ENCODE measurements at regions of chr2 and their contacts with region 1.

Region 1: DNA sequence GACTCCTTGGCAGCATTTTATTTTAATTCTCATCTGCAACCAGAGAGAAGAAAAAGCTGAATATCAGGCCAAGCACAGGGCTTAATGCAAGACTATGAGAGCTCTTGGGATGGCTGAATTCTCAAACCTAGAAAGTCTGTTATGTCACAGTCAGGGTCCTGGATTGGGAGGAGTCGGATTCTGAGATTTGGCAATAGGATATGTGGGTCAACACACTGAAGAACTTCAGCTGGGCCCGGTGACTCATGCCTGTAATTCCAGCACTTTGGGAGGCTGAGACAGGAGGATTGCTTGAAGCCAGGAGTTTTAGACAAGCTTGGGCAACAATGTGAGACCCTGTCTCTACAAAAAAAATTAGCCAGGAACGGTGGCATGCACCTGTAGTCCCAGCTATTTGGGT is 102.4 kb downstream of the COL3A1 start:
- DNase-seq: no peak
- ATAC-seq: no peak
- H3K4me3 ChIP-seq: no peak overlapping the region
- H3K4me3 Mint-ChIP-seq: no peak overlapping the region
- H3K27ac ChIP-seq: no peak overlapping the region
- H3K27ac Mint-ChIP-seq: no peak overlapping the region
- H3K4me1 ChIP-seq: no peaks in the 10 kb centered on the region
- H3K4me1 Mint-ChIP-seq: no peaks in the 10 kb centered on the region
- H3K27me3 ChIP-seq: no peaks in the 10 kb centered on the region
- H3K27me3 Mint-ChIP-seq: no peaks in the 10 kb centered on the region
- CTCF ChIP-seq: no peak

Region 2: DNA sequence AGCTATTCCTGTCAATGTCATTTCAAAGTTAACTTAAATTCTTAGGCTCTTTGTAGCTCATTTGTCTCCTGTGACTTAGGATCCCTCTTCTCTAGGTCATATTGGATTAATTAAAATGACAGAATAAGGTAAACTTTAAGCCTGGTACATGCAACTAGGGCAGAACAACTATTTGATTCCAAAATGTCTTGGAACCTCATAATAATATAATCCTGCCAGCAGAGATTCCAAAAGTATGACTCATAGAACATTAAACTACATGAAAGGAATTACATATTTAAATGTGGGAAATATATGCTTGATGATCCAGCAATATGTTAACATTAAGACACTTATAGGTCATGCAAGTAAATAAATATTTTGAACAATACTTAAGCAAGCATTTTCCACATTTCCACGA is 39.1 kb before region 1 on chr2:
- CTCF ChIA-PET with region 1: no interaction called
- POLR2A ChIA-PET with region 1: no interaction called
- intact Hi-C with region 1: loop called in 1 of 2 experiments (anchors 1 kb)
- DNase-seq: no peak
- ATAC-seq: no peak
- H3K4me3 ChIP-seq: no peak overlapping the region
- H3K4me3 Mint-ChIP-seq: no peak overlapping the region
- H3K27ac ChIP-seq: no peak overlapping the region
- H3K27ac Mint-ChIP-seq: no peak overlapping the region
- H3K4me1 ChIP-seq: no peaks in the 10 kb centered on the region
- H3K4me1 Mint-ChIP-seq: peaks cover 6% of the 10 kb centered on the region
- H3K27me3 ChIP-seq: no peaks in the 10 kb centered on the region
- H3K27me3 Mint-ChIP-seq: no peaks in the 10 kb centered on the region
- CTCF ChIP-seq: no peak

Region 3: DNA sequence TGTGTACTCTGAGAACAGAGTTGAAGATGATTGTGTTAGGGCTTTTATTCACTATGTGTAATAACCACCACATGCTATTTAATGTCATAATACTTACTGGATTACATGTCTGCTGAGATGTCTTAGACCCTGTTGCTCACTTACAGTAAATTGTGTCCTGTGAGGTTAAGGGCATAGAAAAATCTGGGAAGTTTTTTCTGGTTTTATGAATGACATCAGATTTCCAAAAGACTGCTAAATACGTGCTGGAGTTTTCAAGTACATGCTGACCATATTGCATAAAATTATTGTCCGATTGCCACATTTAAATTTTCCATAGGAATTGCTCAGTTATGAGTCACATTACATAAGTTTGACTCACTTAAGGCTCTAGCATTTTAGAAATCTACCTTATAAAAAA is 199.7 kb after region 1 on chr2:
- CTCF ChIA-PET with region 1: no interaction called
- POLR2A ChIA-PET with region 1: no interaction called
- intact Hi-C with region 1: no loop called
- DNase-seq: no peak
- ATAC-seq: no peak
- H3K4me3 ChIP-seq: no peak overlapping the region
- H3K4me3 Mint-ChIP-seq: no peak overlapping the region
- H3K27ac ChIP-seq: no peak overlapping the region
- H3K27ac Mint-ChIP-seq: no peak overlapping the region
- H3K4me1 ChIP-seq: no peaks in the 10 kb centered on the region
- H3K4me1 Mint-ChIP-seq: no peaks in the 10 kb centered on the region
- H3K27me3 ChIP-seq: no peaks in the 10 kb centered on the region
- H3K27me3 Mint-ChIP-seq: no peaks in the 10 kb centered on the region
- CTCF ChIP-seq: no peak

Measured in CD8-positive, alpha-beta T cell (primary cell).